T-cell (primary cell): ENCODE measurements at regions of chr17 and their contacts with region 1.

Region 1: DNA sequence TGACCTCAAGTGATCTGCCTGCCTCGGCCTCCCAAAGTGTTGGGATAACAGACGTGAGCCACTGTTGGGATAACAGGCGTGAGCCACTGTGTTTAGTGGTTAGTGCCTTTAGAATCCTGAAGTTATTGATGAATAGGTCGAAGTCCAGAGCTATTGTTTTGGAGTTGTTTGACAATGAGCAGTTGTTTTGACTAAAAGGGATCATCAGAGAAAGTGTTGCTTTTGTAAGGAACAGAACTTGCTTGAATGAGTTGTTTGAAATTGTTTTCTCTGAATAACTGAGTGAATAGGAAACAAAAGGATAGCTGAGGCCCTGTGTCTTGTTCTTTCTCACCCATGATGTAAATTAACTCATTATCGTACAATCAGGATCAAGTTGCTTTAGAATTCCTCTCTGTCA is 46.6 kb downstream of the PRPSAP2 start:
- DNase-seq: no peak
- ATAC-seq: no peak
- H3K4me3 ChIP-seq: no peak overlapping the region
- H3K4me3 Mint-ChIP-seq: no peak overlapping the region
- H3K27ac ChIP-seq: no peak overlapping the region
- H3K27ac Mint-ChIP-seq: no peak overlapping the region
- H3K4me1 ChIP-seq: peaks cover 25 to 39% of the 10 kb centered on the region in 2 experiments
- H3K4me1 Mint-ChIP-seq: peaks cover 40 to 55% (median 43%) of the 10 kb centered on the region in 3 donors
- H3K27me3 ChIP-seq: no peaks in the 10 kb centered on the region
- H3K27me3 Mint-ChIP-seq: no peaks in the 10 kb centered on the region

Region 2: DNA sequence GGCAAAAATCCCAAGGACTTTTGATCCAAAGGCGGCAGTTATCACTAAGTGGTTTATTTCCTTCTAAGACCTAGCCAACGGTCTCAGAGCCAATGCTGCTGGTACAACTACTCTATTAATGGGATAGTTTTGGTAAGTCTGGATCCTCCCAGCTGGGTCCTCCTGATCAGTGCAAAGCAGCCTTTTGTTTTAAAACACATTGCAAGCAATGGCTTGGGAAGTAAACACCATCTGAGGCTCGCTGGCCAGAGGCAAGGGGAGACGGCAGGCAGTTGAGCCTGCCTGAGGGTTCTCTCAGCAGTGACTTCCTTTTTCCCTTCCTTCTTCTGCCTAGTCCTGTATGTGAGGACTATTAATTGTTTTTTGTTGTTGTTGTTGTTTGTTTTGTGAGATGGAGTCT is 45.9 kb after region 1 on chr17:
- CTCF ChIA-PET with region 1: no interaction called
- POLR2A ChIA-PET with region 1: no interaction called
- DNase-seq: no peak
- ATAC-seq: no peak
- H3K4me3 ChIP-seq: no peak overlapping the region
- H3K4me3 Mint-ChIP-seq: no peak overlapping the region
- H3K27ac ChIP-seq: no peak overlapping the region
- H3K27ac Mint-ChIP-seq: peak overlapping the region in 1 of 2 donors; percentile 39
- H3K4me1 ChIP-seq: peaks cover 11 to 17% of the 10 kb centered on the region in 2 experiments
- H3K4me1 Mint-ChIP-seq: peaks cover 26 to 50% (median 30%) of the 10 kb centered on the region in 3 donors
- H3K27me3 ChIP-seq: peaks cover 0 to 11% of the 10 kb centered on the region in 2 experiments
- H3K27me3 Mint-ChIP-seq: peaks cover 0 to 3% of the 10 kb centered on the region in 2 donors

Region 3: DNA sequence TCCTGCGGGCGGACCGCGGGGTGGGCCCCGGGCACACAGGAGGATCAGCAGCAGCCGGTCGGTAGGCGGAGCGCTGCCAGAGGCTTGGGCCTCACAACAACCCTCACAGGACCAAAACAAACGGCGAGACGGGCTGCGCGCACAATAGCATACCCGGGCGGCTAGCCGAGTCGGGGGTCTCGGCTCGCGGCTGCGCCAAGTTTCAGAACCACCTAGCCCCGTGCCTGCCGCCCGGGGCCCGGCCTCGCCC is 962.5 kb after region 1 on chr17:
- CTCF ChIA-PET with region 1: interaction called in 1 of 2 experiments, 15 read pairs
- POLR2A ChIA-PET with region 1: no interaction called
- DNase-seq: peak in 30 of 35 experiments; percentile 5 to 66 (median 32)
- ATAC-seq: peak; percentile 52 to 63 (median 62)
- H3K4me3 ChIP-seq: peak overlapping the region; percentile 58 to 84
- H3K4me3 Mint-ChIP-seq: peak overlapping the region; percentile 77 to 80 (median 77)
- H3K27ac ChIP-seq: peak overlapping the region; percentile 38
- H3K27ac Mint-ChIP-seq: peak overlapping the region; percentile 66 to 72
- H3K4me1 ChIP-seq: peaks cover 24 to 36% of the 10 kb centered on the region in 2 experiments
- H3K4me1 Mint-ChIP-seq: peaks cover 32 to 39% (median 38%) of the 10 kb centered on the region in 3 donors
- H3K27me3 ChIP-seq: no peaks in the 10 kb centered on the region
- H3K27me3 Mint-ChIP-seq: no peaks in the 10 kb centered on the region